CD8-positive, alpha-beta memory T cell (primary cell): ENCODE measurements at regions of chr2 and their contacts with region 1.

Region 1: DNA sequence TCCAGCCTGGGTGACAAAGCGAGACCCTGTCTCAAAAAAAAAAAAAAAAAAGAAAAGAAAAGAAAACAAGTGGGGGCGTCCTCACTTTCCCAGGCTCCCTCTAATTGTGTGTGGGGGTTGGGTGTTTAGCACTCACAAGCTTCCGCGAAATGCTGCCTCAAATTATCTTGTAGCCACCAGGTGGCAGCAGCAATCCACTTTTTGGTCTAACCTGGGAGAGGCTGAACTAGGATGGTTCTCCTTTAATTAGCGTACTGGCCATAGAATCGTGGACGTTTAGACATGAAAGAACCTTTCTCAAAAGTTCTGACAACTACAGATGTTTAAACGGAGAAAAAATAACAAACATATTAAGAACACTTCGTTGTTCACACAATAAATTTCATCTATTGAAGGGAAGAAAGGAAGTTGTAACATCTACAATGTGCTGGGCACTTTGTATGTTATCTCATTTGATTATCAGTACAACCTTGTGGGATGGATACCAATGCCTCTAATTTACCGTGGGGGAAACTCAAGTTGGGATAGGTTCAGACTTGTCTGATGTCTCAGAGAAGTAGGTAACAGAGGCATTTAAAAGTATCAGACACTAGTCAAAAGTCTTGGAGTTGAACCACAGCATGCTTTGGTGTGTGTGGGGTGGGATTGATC is 122.7 kb upstream of the NABP1 start:
- DNase-seq: peak; percentile 62 to 84 (median 68)
- H3K4me3 ChIP-seq: no peak overlapping the region
- H3K4me3 Mint-ChIP-seq: no peak overlapping the region
- H3K27ac ChIP-seq: no peak overlapping the region
- H3K27ac Mint-ChIP-seq: no peak overlapping the region
- H3K4me1 ChIP-seq: peaks cover 3% of the 10 kb centered on the region
- H3K4me1 Mint-ChIP-seq: peaks cover 3 to 4% (median 3%) of the 10 kb centered on the region in 3 donors
- H3K27me3 ChIP-seq: no peaks in the 10 kb centered on the region
- H3K27me3 Mint-ChIP-seq: peaks cover 7 to 37% of the 10 kb centered on the region in 2 donors

Region 2: GRCh38 chr2:191155608-191156071 is 399.6 kb before region 1 on chr2:
- CTCF ChIA-PET with region 1: no interaction called
- POLR2A ChIA-PET with region 1: no interaction called
- DNase-seq: peak in 2 of 5 donors; percentile 47 to 53
- H3K4me3 ChIP-seq: no peak overlapping the region
- H3K4me3 Mint-ChIP-seq: no peak overlapping the region
- H3K27ac ChIP-seq: no peak overlapping the region
- H3K27ac Mint-ChIP-seq: peak overlapping the region in 6 of 8 donors; percentile 27 to 80 (median 65)
- H3K4me1 ChIP-seq: peaks cover 20% of the 10 kb centered on the region
- H3K4me1 Mint-ChIP-seq: peaks cover 35 to 40% (median 35%) of the 10 kb centered on the region in 3 donors
- H3K27me3 ChIP-seq: no peaks in the 10 kb centered on the region
- H3K27me3 Mint-ChIP-seq: peaks cover 1 to 4% of the 10 kb centered on the region in 2 donors

Region 3: GRCh38 chr2:191544461-191545062 is 10.7 kb before region 1 on chr2:
- CTCF ChIA-PET with region 1: interaction called, 10 read pairs
- POLR2A ChIA-PET with region 1: no interaction called
- DNase-seq: no peak
- H3K4me3 ChIP-seq: no peak overlapping the region
- H3K4me3 Mint-ChIP-seq: no peak overlapping the region
- H3K27ac ChIP-seq: no peak overlapping the region
- H3K27ac Mint-ChIP-seq: peak overlapping the region in 1 of 8 donors; percentile 29
- H3K4me1 ChIP-seq: no peaks in the 10 kb centered on the region
- H3K4me1 Mint-ChIP-seq: no peaks in the 10 kb centered on the region
- H3K27me3 ChIP-seq: no peaks in the 10 kb centered on the region
- H3K27me3 Mint-ChIP-seq: peaks cover 9% of the 10 kb centered on the region in 2 donors

Region 4: GRCh38 chr2:191566344-191566743 is 11.1 kb after region 1 on chr2:
- CTCF ChIA-PET with region 1: interaction called, 26 read pairs
- POLR2A ChIA-PET with region 1: no interaction called
- DNase-seq: peak; percentile 49 to 69 (median 56)
- H3K4me3 ChIP-seq: no peak overlapping the region
- H3K4me3 Mint-ChIP-seq: no peak overlapping the region
- H3K27ac ChIP-seq: no peak overlapping the region
- H3K27ac Mint-ChIP-seq: no peak overlapping the region
- H3K4me1 ChIP-seq: peaks cover 16% of the 10 kb centered on the region
- H3K4me1 Mint-ChIP-seq: peaks cover 26 to 28% (median 27%) of the 10 kb centered on the region in 3 donors
- H3K27me3 ChIP-seq: peaks cover 4% of the 10 kb centered on the region
- H3K27me3 Mint-ChIP-seq: peaks cover 21 to 65% of the 10 kb centered on the region in 2 donors